Prostate gland (tissue), 2 donors: ENCODE measurements at regions of chr22 and their contacts with region 1.

Region 1: GRCh38 chr22:38872172-38872830 is at the start of gene CBX6:
- DNase-seq: peak; percentile 93
- H3K4me3 ChIP-seq: peak within 1 kb of the TSS; percentile 66 to 81
- H3K27ac ChIP-seq: peak within 1 kb of the TSS; percentile 93 to 94
- H3K4me1 ChIP-seq: peaks cover 9% of the 10 kb centered on the region
- H3K27me3 ChIP-seq: no peaks in the 10 kb centered on the region
- CTCF ChIP-seq: peak in 2 of 4 experiments; percentile 14 to 16
- POLR2A ChIP-seq: peak; percentile 60
- total RNA-seq, gene CBX6: 39.9 to 56.2 TPM

Region 2: DNA sequence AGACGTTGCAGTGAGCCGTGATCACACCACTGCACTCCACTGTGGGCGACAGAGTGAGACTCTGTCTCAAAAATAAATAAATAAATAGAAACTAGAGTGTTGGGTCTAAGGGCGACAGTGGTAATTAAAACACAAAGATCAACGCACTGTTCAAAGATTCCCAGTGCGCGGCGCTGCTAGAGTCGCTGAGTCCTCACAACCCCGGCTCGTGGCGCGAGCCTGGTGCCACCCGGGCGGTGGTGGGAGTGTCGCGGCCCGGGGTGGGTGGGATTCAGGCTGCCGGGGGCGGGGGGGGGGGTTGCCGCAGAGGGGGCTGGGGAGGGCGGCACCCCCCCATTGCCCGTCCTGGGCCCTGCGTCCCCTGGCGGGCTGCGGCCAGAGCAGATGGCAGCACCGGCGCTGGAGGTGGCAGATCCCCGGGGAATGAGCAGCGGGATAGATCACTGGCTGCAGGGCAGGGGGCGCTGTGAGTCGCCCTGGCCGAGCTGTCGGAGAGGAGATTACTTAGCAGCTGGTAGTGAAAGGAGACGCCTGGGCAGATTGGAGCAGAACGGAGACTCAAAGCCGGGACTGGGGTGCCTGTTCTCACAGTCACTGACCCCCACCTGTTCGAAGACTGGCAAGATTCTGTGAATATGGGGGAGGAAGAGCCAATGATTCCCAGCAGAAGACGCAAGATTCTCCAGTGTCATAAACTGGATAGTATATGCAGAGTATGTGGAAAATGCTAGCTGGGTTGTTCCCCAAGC is 54.9 kb after region 1 on chr22:
- intact Hi-C with region 1: loop called (anchors 2 kb)
- DNase-seq: peak; percentile 62
- H3K4me3 ChIP-seq: peak overlapping the region; percentile 14 to 22
- H3K27ac ChIP-seq: peak overlapping the region; percentile 5 to 34
- H3K4me1 ChIP-seq: peaks cover 21% of the 10 kb centered on the region
- H3K27me3 ChIP-seq: no peaks in the 10 kb centered on the region
- CTCF ChIP-seq: peak in 3 of 4 experiments; percentile 42 to 59 (median 59)
- POLR2A ChIP-seq: no peak

Region 3: GRCh38 chr22:39003165-39003638 is 130.9 kb after region 1 on chr22:
- intact Hi-C with region 1: loop called (anchors 2 kb)
- DNase-seq: peak; percentile 66
- H3K4me3 ChIP-seq: no peak overlapping the region
- H3K27ac ChIP-seq: no peak overlapping the region
- H3K4me1 ChIP-seq: no peaks in the 10 kb centered on the region
- H3K27me3 ChIP-seq: no peaks in the 10 kb centered on the region
- CTCF ChIP-seq: peak; percentile 29 to 87 (median 71)
- POLR2A ChIP-seq: no peak

Region 4: DNA sequence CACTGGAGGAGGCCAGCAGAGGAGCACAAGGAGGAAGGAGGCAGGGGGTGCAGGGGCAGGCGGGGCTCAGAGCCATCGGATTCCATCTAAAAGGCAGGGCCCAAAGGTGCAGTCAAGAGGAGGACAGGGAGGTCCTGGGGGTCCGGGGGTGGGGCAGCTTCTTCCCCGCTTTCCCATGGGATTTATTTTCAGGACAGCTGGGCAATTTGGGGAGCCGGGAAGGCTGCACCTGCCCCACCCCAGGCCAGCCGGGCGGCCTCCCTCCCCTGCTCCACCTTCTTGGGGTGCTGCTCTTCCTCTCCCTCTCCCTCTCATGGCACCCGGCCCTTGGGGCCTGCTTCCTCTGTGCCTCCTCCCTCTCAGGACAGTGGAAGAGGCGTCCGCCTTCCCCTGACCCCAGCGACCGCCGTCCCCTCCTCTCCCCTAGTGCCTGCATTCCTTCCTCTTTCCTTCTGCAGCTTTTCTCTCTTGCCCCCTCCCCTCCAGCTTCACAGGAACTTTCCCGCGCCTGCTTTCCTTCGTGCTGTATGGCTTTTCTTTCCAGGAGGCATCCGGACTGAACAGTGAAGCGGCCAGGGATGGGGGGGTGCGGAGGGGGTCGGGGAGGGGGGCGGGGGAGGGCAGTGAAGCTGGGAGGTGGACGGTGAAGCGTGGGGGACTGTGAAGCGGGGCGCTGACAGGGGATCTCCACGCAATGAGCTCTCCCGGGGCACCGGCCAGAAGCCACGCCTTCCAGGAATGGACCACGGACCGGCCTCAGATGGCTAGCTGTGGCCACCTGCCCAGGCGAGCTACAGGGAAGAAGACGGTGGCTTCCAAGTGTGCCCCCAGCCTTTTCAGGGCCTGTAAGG is 251.7 kb after region 1 on chr22:
- intact Hi-C with region 1: loop called (anchors 10 kb)
- DNase-seq: no peak
- H3K4me3 ChIP-seq: no peak overlapping the region
- H3K27ac ChIP-seq: no peak overlapping the region
- H3K4me1 ChIP-seq: no peaks in the 10 kb centered on the region
- H3K27me3 ChIP-seq: no peaks in the 10 kb centered on the region
- CTCF ChIP-seq: no peak
- POLR2A ChIP-seq: no peak

Region 5: GRCh38 chr22:39520054-39520891 is 648.0 kb after region 1 on chr22 and contains the start of gene ATF4:
- intact Hi-C with region 1: loop called (anchors 5 kb)
- DNase-seq: peak; percentile 98
- H3K4me3 ChIP-seq: peak within 1 kb of the TSS; percentile 100
- H3K27ac ChIP-seq: peak within 1 kb of the TSS; percentile 100
- H3K4me1 ChIP-seq: peaks cover 17% of the 10 kb centered on the region
- H3K27me3 ChIP-seq: no peaks in the 10 kb centered on the region
- CTCF ChIP-seq: no peak
- POLR2A ChIP-seq: peak; percentile 94
- total RNA-seq, gene ATF4: 294 to 334 TPM